ENCODE measurements at regions of chr1 and their contacts with region 1.

Region 1: GRCh38 chr1:44048816-44049215 is 17.6 kb upstream of the SLC6A9 start:
- DNase-seq: no peak
- H3K4me3 Mint-ChIP-seq: peak overlapping the region; percentile 45
- H3K27ac Mint-ChIP-seq: peak overlapping the region; percentile 74
- H3K4me1 Mint-ChIP-seq: peaks cover 38% of the 10 kb centered on the region
- H3K27me3 Mint-ChIP-seq: no peaks in the 10 kb centered on the region
- CTCF ChIP-seq: no peak

Region 2: DNA sequence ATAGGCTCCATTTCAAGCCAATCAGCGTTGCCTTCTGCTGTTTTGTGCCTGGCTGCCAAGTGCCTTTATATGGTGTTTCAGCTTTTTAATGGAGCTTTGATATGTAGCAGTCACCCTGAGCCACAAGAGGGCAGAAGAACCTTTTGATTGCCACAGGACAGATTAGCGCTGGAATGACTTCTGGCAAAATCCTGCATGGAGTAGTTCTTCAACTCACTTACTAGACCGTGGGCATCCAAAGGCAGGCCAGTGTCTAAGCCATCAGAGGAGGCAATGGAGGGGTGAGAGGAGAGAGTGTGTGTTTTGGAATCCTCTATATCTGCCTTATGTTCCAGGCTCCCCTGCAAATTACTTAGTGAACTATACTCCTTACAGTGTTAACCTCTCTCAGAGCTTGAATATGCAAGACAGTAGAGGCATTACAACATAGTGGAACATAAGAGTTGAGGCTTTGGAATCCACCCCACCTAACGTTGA is 285.3 kb before region 1 on chr1:
- CTCF ChIA-PET with region 1: interaction called, 25 read pairs
- intact Hi-C with region 1: loop called (anchors 1 kb)
- DNase-seq: peak; percentile 74
- H3K4me3 Mint-ChIP-seq: no peak overlapping the region
- H3K27ac Mint-ChIP-seq: no peak overlapping the region
- H3K4me1 Mint-ChIP-seq: no peaks in the 10 kb centered on the region
- H3K27me3 Mint-ChIP-seq: no peaks in the 10 kb centered on the region
- CTCF ChIP-seq: peak; percentile 77

Region 3: GRCh38 chr1:44002606-44003157 is 46.1 kb before region 1 on chr1:
- CTCF ChIA-PET with region 1: interaction called, 17 read pairs
- intact Hi-C with region 1: no loop called
- DNase-seq: no peak
- H3K4me3 Mint-ChIP-seq: no peak overlapping the region
- H3K27ac Mint-ChIP-seq: no peak overlapping the region
- H3K4me1 Mint-ChIP-seq: no peaks in the 10 kb centered on the region
- H3K27me3 Mint-ChIP-seq: no peaks in the 10 kb centered on the region
- CTCF ChIP-seq: peak; percentile 30

Region 4: DNA sequence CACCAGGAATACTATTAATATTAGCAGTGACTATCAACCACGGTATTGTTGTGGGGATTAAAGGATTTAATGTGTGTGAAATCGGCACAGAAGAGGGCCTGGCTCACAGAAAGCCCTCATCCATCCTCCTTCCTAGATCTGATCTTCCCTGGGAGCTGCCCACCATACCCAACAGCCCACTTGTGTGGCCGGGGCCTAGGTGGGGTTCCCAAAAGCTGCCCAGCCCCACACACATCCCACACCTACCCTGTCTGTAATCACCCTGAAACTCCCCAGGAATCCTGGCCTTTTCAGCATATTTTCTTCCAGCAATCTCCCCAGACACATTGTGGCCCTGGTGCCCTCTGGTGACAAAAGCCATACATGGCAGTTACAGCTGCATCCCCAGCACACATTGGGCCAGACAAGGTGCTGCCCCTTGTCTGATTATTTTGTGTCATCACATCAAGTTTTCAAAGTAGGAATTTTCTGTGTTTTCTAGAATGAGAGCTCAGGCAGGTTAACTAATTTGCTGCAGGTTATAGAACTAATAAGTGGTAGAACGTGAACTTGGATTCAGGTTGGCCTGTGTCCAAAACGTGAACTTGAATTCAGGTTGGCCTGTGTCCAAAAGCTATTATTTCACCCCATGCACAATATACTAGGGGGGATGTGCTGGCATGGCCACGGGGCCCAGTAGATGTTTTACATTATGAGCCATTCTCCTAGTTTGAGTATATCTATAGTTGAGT is 12.2 kb before region 1 on chr1:
- CTCF ChIA-PET with region 1: interaction called, 32 read pairs
- intact Hi-C with region 1: no loop called
- DNase-seq: peak; percentile 82
- H3K4me3 Mint-ChIP-seq: no peak overlapping the region
- H3K27ac Mint-ChIP-seq: no peak overlapping the region
- H3K4me1 Mint-ChIP-seq: peaks cover 26% of the 10 kb centered on the region
- H3K27me3 Mint-ChIP-seq: no peaks in the 10 kb centered on the region
- CTCF ChIP-seq: peak; percentile 58

Region 5: DNA sequence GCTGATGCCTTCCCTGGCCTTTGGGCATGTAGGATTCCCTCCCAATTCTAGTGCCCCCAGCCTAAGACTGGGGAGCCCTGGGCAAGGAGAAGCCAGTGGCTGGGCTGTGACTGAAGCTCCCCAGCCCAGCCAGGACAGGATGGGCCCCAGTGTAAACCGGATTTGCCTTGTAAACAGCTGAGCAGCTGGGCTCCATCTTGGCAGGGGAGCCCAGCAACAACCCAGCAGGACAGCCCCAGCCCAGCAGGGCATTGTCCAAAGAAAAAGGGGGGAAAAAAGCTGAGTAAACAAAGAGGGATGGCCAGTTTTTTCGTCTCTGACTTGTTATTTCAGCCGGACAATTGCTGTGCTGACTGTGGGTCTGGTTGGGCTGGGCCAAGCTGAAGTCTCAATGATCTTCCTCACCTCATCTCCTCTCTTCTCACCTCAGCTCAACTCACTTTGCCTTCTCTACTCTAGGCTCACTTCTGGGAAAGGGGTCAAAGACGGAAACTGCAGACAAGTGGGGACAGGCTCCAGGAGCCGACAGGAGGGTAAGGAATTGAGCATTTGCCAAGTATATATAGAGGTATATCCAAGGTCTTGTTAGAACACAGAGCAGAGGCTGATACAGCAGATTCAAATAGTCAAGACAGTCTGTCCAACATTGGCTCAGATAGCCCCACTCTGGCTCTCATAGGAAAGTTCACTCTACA is 527.8 kb after region 1 on chr1:
- CTCF ChIA-PET with region 1: no interaction called
- intact Hi-C with region 1: no loop called
- DNase-seq: no peak
- H3K4me3 Mint-ChIP-seq: no peak overlapping the region
- H3K27ac Mint-ChIP-seq: no peak overlapping the region
- H3K4me1 Mint-ChIP-seq: no peaks in the 10 kb centered on the region
- H3K27me3 Mint-ChIP-seq: peaks cover 15% of the 10 kb centered on the region
- CTCF ChIP-seq: no peak